Endothelial cell of umbilical vein (primary cell): ENCODE measurements at regions of chr17 and their contacts with region 1.

Region 1: DNA sequence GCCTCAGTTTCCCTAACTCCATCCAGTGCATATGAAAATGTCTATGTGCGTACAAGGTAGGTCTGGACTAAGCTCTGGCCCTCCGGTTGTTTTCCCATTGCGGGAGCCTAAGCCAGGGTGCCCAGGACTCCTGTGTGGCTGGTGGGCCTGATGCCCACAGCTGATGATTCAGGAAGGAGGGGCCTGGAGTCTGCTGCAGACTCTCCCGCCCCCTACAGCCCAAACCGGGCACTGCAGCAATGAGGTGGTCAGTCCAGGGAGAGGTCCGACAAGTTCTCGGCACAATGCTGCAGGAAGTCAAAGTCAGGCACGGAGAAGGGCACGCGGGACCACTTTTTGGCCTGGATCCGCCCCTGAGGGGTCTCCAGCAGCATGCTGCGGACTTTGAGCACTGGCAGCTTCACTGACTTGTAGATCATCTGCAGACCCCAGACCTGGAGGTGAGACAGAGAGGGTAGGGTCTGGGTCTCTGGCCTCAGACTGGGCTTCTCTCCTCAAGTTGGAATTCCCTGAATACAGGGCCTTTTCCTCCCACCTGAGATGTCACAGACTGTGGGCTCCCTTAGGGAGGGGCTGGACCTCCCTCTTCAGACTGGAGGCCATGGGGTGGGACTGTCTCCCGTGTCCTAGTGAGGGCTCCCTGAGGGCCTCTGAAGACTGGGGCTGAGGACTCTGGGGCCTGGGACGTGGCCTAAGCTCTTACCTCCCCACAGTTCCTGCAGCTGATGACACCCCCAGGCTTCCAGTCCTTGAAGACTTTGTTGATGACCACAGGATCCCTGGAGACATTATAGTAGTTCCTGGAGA is 3.4 kb upstream of the ZNF385C start:
- DNase-seq: peak; percentile 78
- H3K4me3 ChIP-seq: no peak overlapping the region
- H3K27ac ChIP-seq: no peak overlapping the region
- H3K4me1 ChIP-seq: peaks cover 5% of the 10 kb centered on the region
- H3K27me3 ChIP-seq: peaks cover 14 to 15% of the 10 kb centered on the region in 2 experiments
- CTCF ChIP-seq: peak; percentile 96 to 97
- POLR2A ChIP-seq: no peak

Region 2: GRCh38 chr17:42027961-42028790 is 73.5 kb before region 1 on chr17:
- CTCF ChIA-PET with region 1: interaction called, 40 read pairs
- POLR2A ChIA-PET with region 1: no interaction called
- dilution Hi-C with region 1: no loop called
- intact Hi-C with region 1: loop called (anchors 1 kb)
- DNase-seq: no peak
- H3K4me3 ChIP-seq: no peak overlapping the region
- H3K27ac ChIP-seq: no peak overlapping the region
- H3K4me1 ChIP-seq: peaks cover 20% of the 10 kb centered on the region
- H3K27me3 ChIP-seq: peaks cover 0 to 1% of the 10 kb centered on the region in 2 experiments
- CTCF ChIP-seq: no peak
- POLR2A ChIP-seq: no peak

Region 3: GRCh38 chr17:42067351-42068091 is 34.2 kb before region 1 on chr17:
- CTCF ChIA-PET with region 1: interaction called, 41 read pairs
- POLR2A ChIA-PET with region 1: no interaction called
- dilution Hi-C with region 1: no loop called
- intact Hi-C with region 1: loop called (anchors 1 kb)
- DNase-seq: peak; percentile 57
- H3K4me3 ChIP-seq: no peak overlapping the region
- H3K27ac ChIP-seq: no peak overlapping the region
- H3K4me1 ChIP-seq: peaks cover 3% of the 10 kb centered on the region
- H3K27me3 ChIP-seq: peaks cover 0 to 9% of the 10 kb centered on the region in 2 experiments
- CTCF ChIP-seq: peak; percentile 76 to 89
- POLR2A ChIP-seq: no peak

Region 4: GRCh38 chr17:42087736-42088705 is 13.7 kb before region 1 on chr17:
- CTCF ChIA-PET with region 1: interaction called, 29 read pairs
- POLR2A ChIA-PET with region 1: interaction called, 3 read pairs
- dilution Hi-C with region 1: no loop called
- intact Hi-C with region 1: no loop called
- DNase-seq: no peak
- H3K4me3 ChIP-seq: no peak overlapping the region
- H3K27ac ChIP-seq: no peak overlapping the region
- H3K4me1 ChIP-seq: no peaks in the 10 kb centered on the region
- H3K27me3 ChIP-seq: peaks cover 11 to 13% of the 10 kb centered on the region in 2 experiments
- CTCF ChIP-seq: no peak
- POLR2A ChIP-seq: no peak